Ascending aorta (tissue), 2 donors: ENCODE measurements at regions of chr12 and their contacts with region 1.

Region 1: GRCh38 chr12:6182116-6182898 is 17.9 kb upstream of the CD9 start:
- DNase-seq: peak in 1 of 2 donors; percentile 86
- H3K4me3 ChIP-seq: peak overlapping the region in 1 of 2 donors; percentile 33
- H3K27ac ChIP-seq: peak overlapping the region; percentile 89 to 92
- H3K4me1 ChIP-seq: peaks cover 20 to 56% of the 10 kb centered on the region in 2 donors
- H3K27me3 ChIP-seq: no peaks in the 10 kb centered on the region
- CTCF ChIP-seq: no peak

Region 2: DNA sequence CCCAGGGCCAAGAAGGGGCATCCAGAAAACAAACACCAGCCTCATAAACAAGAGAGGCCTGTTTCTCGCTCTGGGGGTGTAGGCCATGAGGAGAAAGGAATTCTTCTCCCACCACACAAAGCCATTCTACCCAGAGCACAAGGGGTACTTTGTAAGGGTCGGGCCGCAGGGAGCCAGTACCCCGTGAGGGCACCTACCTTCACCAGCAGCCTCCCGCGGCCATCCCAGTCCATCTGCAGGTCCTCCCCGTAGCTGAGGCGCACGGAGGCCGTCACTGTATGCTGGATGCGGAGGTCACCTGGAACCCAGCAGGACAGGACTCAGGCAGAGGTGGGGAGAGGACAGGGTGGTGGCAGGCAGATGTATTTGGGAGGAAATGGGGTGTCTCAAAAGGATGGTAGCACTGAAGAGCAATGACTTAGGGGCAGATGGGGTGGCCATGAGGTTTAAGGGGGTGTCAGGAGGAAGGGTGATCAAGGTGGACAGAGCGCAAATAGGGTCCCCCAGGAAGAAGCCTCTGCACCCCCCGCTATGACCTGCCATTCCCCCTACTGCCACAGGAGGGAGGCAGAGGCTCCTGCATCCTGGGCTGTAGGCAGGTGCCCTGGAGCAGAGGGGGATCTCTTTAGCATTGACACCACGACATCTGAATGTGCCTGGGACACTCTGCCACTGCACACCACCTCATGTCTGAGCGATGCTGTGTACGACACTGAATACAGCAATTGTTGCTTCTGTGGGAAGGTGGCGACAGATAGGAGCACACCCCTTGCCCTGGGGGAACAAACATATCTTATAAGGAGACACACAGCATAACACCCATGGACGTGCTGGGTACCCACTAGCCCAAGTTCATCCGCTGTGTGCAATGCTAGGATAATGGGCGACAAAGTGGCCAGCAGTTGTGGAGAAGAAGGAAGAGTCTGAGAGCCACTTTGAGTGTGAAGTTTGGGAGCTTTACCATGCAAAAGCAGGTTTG is 119.3 kb before region 1 on chr12:
- intact Hi-C with region 1: loop called (anchors 5 kb)
- DNase-seq: no peak
- H3K4me3 ChIP-seq: no peak overlapping the region
- H3K27ac ChIP-seq: no peak overlapping the region
- H3K4me1 ChIP-seq: peaks cover 0 to 3% of the 10 kb centered on the region in 2 donors
- H3K27me3 ChIP-seq: no peaks in the 10 kb centered on the region
- CTCF ChIP-seq: peak; percentile 89 to 95 (median 94)

Region 3: GRCh38 chr12:6167327-6168259 is 14.7 kb before region 1 on chr12:
- intact Hi-C with region 1: loop called (anchors 1 kb)
- DNase-seq: peak; percentile 75 to 95
- H3K4me3 ChIP-seq: no peak overlapping the region
- H3K27ac ChIP-seq: peak overlapping the region; percentile 93 to 98
- H3K4me1 ChIP-seq: peaks cover 9 to 31% of the 10 kb centered on the region in 2 donors
- H3K27me3 ChIP-seq: no peaks in the 10 kb centered on the region
- CTCF ChIP-seq: no peak

Region 4: GRCh38 chr12:6195665-6196535 is 13.6 kb after region 1 on chr12:
- intact Hi-C with region 1: no loop called
- DNase-seq: peak; percentile 71 to 95
- H3K4me3 ChIP-seq: no peak overlapping the region
- H3K27ac ChIP-seq: peak overlapping the region; percentile 42 to 53
- H3K4me1 ChIP-seq: peaks cover 0 to 13% of the 10 kb centered on the region in 2 donors
- H3K27me3 ChIP-seq: no peaks in the 10 kb centered on the region
- CTCF ChIP-seq: peak; percentile 83 to 98 (median 97)